GM13977 (cell line): ENCODE measurements at regions of chr15 and their contacts with region 1.

Region 1: DNA sequence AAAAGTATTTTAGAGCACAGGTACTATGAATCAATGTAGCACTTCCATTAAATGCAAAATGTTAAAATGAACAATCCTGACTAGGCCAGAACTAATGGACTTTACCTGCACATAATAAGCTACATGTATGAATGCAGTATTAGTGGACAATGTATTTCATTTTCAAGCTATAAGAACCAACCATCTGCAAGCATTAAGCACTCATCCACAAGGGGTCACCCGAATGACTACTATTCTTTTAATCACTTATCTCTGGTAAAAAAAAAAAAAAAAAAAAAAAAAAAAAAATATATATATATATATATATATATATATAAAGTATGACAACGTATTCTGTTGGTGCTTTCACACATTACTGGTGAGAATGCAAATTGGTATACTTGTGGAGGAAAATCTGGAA is 7.2 kb downstream of the HERC1 start:
- DNase-seq: no peak
- CTCF ChIP-seq: peak; percentile 37

Region 2: DNA sequence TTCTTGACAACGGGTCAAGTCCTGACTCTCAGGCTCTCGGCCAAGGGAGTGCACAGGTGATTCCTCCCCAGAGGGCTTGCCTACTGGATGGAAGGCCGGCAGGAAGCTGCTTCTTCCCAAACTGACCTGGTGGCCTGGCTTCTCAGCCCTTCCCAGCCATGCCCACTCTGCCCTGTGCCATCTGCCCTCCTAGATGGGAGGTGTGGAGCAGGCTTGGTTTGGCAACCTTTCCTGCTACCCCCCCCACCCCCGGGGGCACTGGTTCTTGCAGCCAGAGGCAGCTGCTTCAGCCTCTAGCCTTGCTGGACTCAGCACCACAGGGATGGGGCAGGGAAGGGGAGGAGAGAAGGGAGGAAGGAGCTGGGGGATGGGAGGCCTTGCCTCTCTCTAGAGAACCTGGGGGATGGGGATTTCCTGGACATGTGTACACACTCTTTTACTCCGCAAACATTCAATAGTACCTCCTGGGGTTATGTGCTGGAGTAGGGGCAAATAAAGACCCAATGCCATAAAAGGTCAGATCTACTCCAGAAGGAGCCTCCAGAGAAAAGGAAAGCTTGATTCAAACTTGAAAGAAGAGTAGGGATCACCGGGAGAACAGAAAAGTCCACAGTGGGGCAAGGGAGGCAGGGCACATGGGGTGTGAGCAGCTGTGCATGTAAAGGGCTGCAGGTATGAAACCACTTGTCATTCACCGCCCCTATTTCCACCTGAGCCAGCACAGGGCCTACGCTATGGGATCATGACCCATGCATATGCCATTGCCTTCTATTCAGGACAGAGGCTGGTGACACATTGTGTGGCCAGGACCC is 224.0 kb after region 1 on chr15:
- in situ Hi-C with region 1: loop called (anchors 10 kb)
- DNase-seq: no peak
- CTCF ChIP-seq: no peak